CD8-positive, alpha-beta T cell (primary cell): ENCODE measurements at regions of chr13 and their contacts with region 1.

Region 1: DNA sequence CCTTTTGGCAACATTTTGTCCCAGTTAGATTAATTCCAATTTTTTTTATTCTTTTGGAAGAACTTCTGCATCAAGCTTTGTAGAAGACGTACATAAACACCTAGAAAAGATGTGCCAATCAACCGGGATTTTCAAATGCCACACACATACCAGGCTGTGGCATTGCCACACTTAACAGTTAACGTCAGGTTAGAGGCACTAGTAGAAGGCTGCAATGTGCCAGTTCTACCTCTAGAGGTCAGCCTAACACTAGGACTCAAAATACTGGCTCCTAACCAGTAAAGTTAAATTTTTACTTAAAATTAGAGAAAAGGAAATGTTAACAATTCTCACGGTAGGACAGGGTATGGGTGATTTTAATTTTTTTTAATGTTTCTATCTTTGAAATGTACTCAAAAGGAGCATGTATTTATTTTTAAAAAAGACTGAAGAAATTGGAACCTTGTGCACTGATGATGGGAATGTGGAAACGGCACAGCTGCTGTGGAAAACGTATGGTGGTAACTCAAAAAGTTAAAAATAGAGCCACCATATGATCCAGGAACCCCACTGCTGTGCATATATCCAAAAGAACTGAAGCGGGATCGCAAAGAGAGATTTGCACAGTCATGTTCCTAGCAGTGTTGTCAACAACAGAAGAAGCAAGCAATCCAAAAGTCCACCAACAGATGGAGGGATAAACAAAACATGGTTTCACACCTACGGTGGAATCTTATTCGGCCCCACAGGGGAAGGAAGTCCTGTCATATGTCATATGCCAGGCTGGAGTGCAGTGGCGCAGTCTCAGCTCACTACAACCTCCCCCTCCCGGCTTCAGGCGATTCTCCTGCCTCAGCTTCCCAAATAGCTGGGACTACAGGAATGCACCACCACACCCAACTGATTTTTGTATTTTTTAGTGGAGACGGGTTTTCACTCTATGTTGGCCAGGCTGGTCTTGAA is 30.3 kb downstream of the CRYL1 start:
- DNase-seq: peak; percentile 25 to 79 (median 66)
- ATAC-seq: peak; percentile 98
- H3K4me3 ChIP-seq: no peak overlapping the region
- H3K4me3 Mint-ChIP-seq: no peak overlapping the region
- H3K27ac ChIP-seq: no peak overlapping the region
- H3K27ac Mint-ChIP-seq: no peak overlapping the region
- H3K4me1 ChIP-seq: no peaks in the 10 kb centered on the region
- H3K4me1 Mint-ChIP-seq: peaks cover 15% of the 10 kb centered on the region
- H3K27me3 ChIP-seq: no peaks in the 10 kb centered on the region
- H3K27me3 Mint-ChIP-seq: no peaks in the 10 kb centered on the region
- CTCF ChIP-seq: peak; percentile 99

Region 2: GRCh38 chr13:20182231-20182846 is 313.0 kb before region 1 on chr13:
- CTCF ChIA-PET with region 1: no interaction called
- POLR2A ChIA-PET with region 1: no interaction called
- intact Hi-C with region 1: loop called in 1 of 2 experiments (anchors 5 kb)
- DNase-seq: peak in 8 of 9 experiments; percentile 12 to 84 (median 54)
- ATAC-seq: peak; percentile 100
- H3K4me3 ChIP-seq: no peak overlapping the region
- H3K4me3 Mint-ChIP-seq: no peak overlapping the region
- H3K27ac ChIP-seq: no peak overlapping the region
- H3K27ac Mint-ChIP-seq: no peak overlapping the region
- H3K4me1 ChIP-seq: no peaks in the 10 kb centered on the region
- H3K4me1 Mint-ChIP-seq: peaks cover 3% of the 10 kb centered on the region
- H3K27me3 ChIP-seq: no peaks in the 10 kb centered on the region
- H3K27me3 Mint-ChIP-seq: peaks cover 42% of the 10 kb centered on the region
- CTCF ChIP-seq: peak; percentile 62

Region 3: DNA sequence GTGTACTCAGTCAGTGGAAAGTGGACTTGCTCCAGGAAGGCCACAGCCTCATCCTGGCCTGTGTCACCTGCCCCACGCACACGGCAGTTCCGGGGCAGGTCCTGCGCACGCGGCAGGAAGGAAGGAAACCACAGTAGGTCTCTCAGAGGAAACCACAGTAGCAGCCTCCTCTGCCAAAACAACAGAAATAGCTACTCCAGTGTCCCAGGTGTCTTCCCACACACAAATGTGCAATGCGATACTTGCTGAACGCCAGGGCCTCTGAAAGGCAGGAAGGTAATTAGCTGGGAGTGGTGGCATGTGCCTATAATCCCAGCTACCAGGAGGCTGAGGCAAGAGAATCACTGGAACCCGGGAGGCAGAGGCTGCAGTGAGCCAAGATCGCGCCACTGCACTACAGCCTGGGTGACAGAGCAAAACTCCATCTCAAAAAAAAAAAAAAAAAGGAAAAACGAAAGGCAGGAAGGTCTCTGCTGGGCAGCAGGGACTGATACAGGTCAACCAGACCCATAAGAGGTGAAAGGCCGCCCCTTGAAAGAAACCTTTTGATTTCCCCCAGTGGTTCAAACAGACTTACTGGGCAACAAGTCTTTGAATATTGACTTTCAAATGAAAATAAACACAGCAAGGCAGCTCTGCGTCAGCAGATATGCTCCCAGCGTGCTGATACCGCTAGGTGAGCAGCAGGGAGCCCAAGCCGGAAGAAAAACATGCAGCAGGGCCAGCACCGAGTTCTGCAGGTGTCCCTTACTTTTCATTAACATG is 19.2 kb before region 1 on chr13:
- CTCF ChIA-PET with region 1: interaction called, 18 read pairs
- POLR2A ChIA-PET with region 1: interaction called, 4 read pairs
- intact Hi-C with region 1: no loop called
- DNase-seq: peak; percentile 48 to 92 (median 69)
- ATAC-seq: peak; percentile 88
- H3K4me3 ChIP-seq: peak overlapping the region; percentile 9 to 52
- H3K4me3 Mint-ChIP-seq: peak overlapping the region; percentile 81
- H3K27ac ChIP-seq: peak overlapping the region; percentile 48 to 91
- H3K27ac Mint-ChIP-seq: peak overlapping the region; percentile 98
- H3K4me1 ChIP-seq: peaks cover 34% of the 10 kb centered on the region
- H3K4me1 Mint-ChIP-seq: peaks cover 63% of the 10 kb centered on the region
- H3K27me3 ChIP-seq: no peaks in the 10 kb centered on the region
- H3K27me3 Mint-ChIP-seq: no peaks in the 10 kb centered on the region
- CTCF ChIP-seq: no peak

Region 4: DNA sequence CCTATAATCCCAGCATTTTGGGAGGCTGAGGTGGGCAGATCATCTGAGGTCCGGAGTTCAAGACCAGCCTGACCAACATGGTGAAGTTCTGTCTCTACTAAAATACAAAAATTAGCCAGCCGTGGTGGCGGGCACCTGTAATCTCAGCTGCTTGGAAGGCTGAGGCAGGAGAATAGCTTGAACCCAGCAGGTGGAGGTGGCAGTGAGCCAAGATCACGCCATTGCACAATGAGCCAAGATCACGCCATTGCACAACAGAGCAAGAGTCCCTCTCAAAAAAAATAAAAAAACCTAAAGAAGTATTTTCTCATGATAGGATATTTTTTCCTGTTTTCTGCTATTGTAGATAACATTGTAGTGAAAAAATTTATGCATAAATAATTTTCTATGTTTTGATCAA is 84.9 kb after region 1 on chr13:
- CTCF ChIA-PET with region 1: interaction called, 3 read pairs
- POLR2A ChIA-PET with region 1: no interaction called
- intact Hi-C with region 1: loop called (anchors 5 kb)
- DNase-seq: no peak
- ATAC-seq: no peak
- H3K4me3 ChIP-seq: no peak overlapping the region
- H3K4me3 Mint-ChIP-seq: no peak overlapping the region
- H3K27ac ChIP-seq: no peak overlapping the region
- H3K27ac Mint-ChIP-seq: no peak overlapping the region
- H3K4me1 ChIP-seq: no peaks in the 10 kb centered on the region
- H3K4me1 Mint-ChIP-seq: no peaks in the 10 kb centered on the region
- H3K27me3 ChIP-seq: no peaks in the 10 kb centered on the region
- H3K27me3 Mint-ChIP-seq: no peaks in the 10 kb centered on the region
- CTCF ChIP-seq: no peak

Region 5: GRCh38 chr13:20713751-20714150 is 218.4 kb after region 1 on chr13:
- CTCF ChIA-PET with region 1: interaction called, 12 read pairs
- POLR2A ChIA-PET with region 1: no interaction called
- intact Hi-C with region 1: loop called (anchors 1 to 2 kb)
- DNase-seq: no peak
- ATAC-seq: no peak
- H3K4me3 ChIP-seq: no peak overlapping the region
- H3K4me3 Mint-ChIP-seq: no peak overlapping the region
- H3K27ac ChIP-seq: no peak overlapping the region
- H3K27ac Mint-ChIP-seq: no peak overlapping the region
- H3K4me1 ChIP-seq: peaks cover 4% of the 10 kb centered on the region
- H3K4me1 Mint-ChIP-seq: peaks cover 8% of the 10 kb centered on the region
- H3K27me3 ChIP-seq: no peaks in the 10 kb centered on the region
- H3K27me3 Mint-ChIP-seq: peaks cover 2% of the 10 kb centered on the region
- CTCF ChIP-seq: no peak

Region 6: GRCh38 chr13:20924758-20925394 is 429.5 kb after region 1 on chr13:
- CTCF ChIA-PET with region 1: interaction called, 39 read pairs
- POLR2A ChIA-PET with region 1: no interaction called
- intact Hi-C with region 1: loop called (anchors 1 kb)
- DNase-seq: peak; percentile 46 to 80 (median 78)
- ATAC-seq: peak; percentile 44
- H3K4me3 ChIP-seq: no peak overlapping the region
- H3K4me3 Mint-ChIP-seq: no peak overlapping the region
- H3K27ac ChIP-seq: no peak overlapping the region
- H3K27ac Mint-ChIP-seq: no peak overlapping the region
- H3K4me1 ChIP-seq: no peaks in the 10 kb centered on the region
- H3K4me1 Mint-ChIP-seq: no peaks in the 10 kb centered on the region
- H3K27me3 ChIP-seq: no peaks in the 10 kb centered on the region
- H3K27me3 Mint-ChIP-seq: peaks cover 2% of the 10 kb centered on the region
- CTCF ChIP-seq: peak; percentile 87